Motor neuron (in vitro differentiated cells): ENCODE measurements at regions of chr2 and their contacts with region 1.

Region 1: GRCh38 chr2:60998628-60999545 is 18.6 kb upstream of the PEX13 start:
- ATAC-seq: peak in 5 of 8 experiments; percentile 33 to 57 (median 37)
- H3K4me3 ChIP-seq: no peak overlapping the region
- H3K27ac ChIP-seq: no peak overlapping the region
- H3K4me1 ChIP-seq: no peaks in the 10 kb centered on the region

Region 2: GRCh38 chr2:60707750-60708371 is 291.0 kb before region 1 on chr2:
- in situ Hi-C with region 1: loop called in 6 of 9 experiments (anchors 10 to 25 kb)
- ATAC-seq: peak in 4 of 8 experiments; percentile 26 to 72 (median 56)
- H3K4me3 ChIP-seq: no peak overlapping the region
- H3K27ac ChIP-seq: no peak overlapping the region
- H3K4me1 ChIP-seq: no peaks in the 10 kb centered on the region

Region 3: DNA sequence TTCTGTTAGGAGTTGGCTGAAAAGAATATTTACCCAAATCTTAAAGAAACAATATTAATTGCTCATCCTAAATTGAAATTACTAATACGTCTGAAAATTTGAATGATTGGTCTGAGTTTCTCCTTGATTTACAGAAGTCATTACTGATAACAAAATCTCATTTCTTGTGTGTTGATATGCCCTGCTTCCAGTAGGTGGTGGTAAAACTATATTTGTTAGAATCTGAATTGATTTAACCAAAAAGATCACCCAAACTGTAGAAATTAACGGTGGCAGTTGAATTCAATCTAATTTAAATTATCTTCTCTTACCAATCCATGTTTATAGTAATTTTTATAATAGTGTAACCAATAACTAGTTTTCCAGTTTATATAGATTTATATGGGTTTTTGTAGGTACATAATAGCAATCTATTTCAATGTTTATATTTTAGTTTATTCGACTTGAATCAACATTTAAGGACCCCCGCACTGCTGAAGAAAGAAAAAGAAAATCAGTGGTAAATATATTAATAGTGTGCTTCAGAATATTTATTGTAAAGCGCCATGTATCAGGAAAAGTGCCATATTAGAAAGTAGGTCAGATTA is 204.5 kb before region 1 on chr2:
- in situ Hi-C with region 1: loop called in 2 of 9 experiments (anchors 10 to 25 kb)
- ATAC-seq: no peak
- H3K4me3 ChIP-seq: no peak overlapping the region
- H3K27ac ChIP-seq: no peak overlapping the region
- H3K4me1 ChIP-seq: no peaks in the 10 kb centered on the region

Region 4: DNA sequence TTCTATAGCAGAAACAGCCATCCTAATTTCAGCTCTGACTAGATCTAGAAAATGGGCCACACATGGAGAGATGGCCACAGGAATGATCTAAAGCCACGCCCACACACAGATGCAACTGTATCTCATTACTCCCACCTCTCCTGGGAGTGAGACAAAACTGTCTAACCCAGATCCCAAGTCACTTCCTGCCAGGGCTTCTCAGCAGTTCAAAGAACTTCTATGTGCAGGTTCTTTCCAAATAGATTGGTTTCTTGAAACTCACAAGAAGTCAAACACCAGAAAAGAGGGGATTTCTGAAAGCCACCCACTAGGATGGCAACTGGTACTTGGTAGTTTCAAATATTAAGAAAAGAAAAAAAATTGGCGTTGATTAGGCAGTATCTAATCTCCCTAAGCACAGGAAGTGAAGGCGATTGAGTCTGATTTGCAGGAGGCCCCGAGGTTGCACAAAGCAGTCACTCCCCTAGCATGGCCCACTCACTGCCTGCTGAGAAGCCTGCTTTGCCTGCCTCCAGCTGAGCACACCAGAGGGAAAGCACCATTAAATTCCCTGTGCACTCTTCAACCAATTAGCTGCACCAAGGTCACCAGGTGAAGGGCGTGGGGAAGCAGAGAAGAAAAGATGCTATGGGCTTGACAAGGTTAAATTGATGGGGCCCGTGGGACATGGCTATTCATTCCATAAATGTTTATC is 191.8 kb before region 1 on chr2:
- in situ Hi-C with region 1: loop called in 2 of 9 experiments (anchors 10 to 25 kb)
- ATAC-seq: peak; percentile 68 to 93 (median 87)
- H3K4me3 ChIP-seq: no peak overlapping the region
- H3K27ac ChIP-seq: peak overlapping the region in 1 of 2 donors; percentile 22
- H3K4me1 ChIP-seq: peaks cover 13 to 17% of the 10 kb centered on the region in 2 donors